Right lobe of liver (tissue), 6 donors: ENCODE measurements at regions of chr11 and their contacts with region 1.

Region 1: DNA sequence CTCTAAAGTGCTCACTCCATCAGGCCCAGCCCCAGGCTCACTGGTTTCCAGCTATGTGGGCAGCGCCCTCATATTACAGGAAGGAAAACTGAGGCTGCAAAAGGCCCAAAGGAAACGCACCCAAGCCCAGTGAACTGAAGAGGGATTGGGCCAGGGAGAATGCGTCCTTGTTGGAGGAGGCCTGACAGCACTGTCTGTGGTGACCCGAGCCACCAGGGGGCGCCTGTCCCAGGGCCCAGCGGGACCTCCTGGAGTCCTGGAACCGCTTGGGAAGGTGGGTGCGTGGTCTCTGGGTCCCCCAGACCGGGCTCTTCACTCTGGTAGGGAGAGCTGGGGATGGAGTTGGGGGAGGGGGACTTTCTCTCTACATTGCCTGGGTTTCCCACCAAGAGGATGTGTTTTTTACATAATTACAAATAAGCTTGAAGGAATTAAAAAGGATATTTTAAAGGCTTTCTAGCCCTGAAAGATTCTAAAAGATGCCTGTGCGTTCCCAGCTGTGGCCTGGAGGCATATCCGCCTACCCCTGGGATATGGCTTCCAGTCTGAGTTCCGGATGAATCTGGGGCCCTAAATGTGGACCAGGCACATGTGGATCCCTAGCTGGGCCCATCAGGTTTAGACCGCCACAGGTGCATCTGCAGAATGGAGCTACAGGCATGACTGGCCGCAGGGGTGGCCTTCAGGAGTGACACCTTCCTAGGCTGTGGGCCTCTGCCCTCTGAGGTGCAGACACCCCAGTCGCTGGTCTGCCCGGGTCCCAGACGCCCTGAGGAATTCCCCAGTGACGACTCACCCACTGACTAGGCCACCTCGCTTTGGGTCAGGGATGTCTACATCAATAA is 4.2 kb downstream of the SPI1 start:
- DNase-seq: peak; percentile 86 to 88 (median 86)
- ATAC-seq: peak; percentile 84 to 91 (median 86)
- H3K4me3 ChIP-seq: no peak overlapping the region
- H3K27ac ChIP-seq: no peak overlapping the region
- H3K4me1 ChIP-seq: peaks cover 0 to 2% (median 0%) of the 10 kb centered on the region in 4 donors
- H3K27me3 ChIP-seq: no peaks in the 10 kb centered on the region
- CTCF ChIP-seq: peak; percentile 87 to 97 (median 96)
- POLR2A ChIP-seq: no peak

Region 2: DNA sequence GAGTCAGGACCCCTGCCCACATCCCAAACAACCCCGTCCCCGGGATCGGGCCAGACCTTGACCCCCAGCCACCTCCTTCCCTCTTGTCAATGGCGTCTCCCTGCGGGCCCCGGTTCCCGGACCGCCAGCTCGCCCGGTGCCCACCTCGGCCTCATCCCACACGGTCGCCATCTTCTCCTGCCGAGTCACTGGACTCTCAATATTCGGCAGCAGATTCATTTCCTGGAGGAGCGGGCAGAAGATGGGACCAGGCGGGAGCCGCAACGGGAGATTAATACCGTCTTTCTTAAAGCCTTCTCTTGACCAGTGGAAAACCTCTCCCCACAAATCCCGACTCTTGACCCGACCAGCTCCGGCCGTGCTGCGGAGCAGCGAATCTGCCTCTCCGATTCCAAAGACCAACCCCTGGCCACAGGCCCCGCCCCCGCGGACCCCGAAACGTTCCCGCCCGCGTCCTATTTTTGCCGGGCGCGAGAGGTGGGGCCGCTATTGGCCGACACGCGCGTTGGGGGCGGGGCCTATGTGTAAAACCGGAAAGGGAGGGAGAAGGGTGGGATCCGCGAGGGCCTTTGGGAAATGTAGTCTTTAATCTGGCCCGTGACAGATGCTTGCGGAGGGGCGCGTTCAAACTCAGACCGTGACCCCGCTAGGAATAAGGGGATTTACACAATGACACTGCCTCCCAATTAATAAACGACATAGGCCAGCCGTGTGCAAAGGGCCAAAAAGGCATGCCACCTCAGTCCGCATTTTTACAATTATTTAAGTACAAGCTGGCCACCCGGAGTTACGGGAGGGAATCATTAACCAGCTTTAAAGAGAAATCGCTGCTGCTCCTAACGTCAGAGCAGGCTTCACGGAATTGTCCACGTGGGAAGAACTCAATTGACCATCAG is 52.2 kb after region 1 on chr11 and contains the start of gene PSMC3:
- intact Hi-C with region 1: loop called in 1 of 2 experiments (anchors 10 kb)
- DNase-seq: peak; percentile 98 to 99 (median 98)
- ATAC-seq: peak; percentile 92 to 96 (median 94)
- H3K4me3 ChIP-seq: peak within 1 kb of the TSS; percentile 77 to 99 (median 81)
- H3K27ac ChIP-seq: peak within 1 kb of the TSS; percentile 93 to 98 (median 95)
- H3K4me1 ChIP-seq: peaks cover 0 to 13% (median 3%) of the 10 kb centered on the region in 4 donors
- H3K27me3 ChIP-seq: no peaks in the 10 kb centered on the region
- CTCF ChIP-seq: no peak
- POLR2A ChIP-seq: peak; percentile 66
- total RNA-seq, gene PSMC3: 52.5 to 98.1 (median 63.3) TPM

Region 3: DNA sequence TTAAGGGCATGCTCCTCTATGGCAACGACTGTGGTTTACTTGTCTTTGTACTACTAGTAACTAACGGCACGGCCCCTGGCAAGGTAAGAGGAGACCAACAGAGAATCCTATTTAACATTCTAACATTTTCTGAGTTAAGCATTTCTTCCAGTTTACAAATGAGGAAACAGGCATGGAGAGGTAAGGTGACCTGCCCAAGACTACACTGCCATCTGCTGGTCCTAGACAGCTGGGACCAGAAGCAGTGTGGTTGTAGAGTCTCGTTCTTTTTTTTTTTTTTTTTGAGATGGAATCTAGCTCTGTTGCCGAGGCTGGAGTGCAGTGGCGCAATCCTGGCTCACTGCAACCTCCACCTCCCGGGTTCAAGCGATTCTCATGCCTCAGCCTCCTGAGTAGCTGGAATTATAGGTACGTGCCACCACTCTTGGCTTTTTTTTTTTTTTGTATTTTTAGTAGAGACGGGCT is 80.1 kb after region 1 on chr11:
- intact Hi-C with region 1: loop called in 1 of 2 experiments (anchors 5 kb)
- DNase-seq: peak; percentile 62 to 84 (median 80)
- ATAC-seq: peak; percentile 93 to 98 (median 96)
- H3K4me3 ChIP-seq: no peak overlapping the region
- H3K27ac ChIP-seq: no peak overlapping the region
- H3K4me1 ChIP-seq: peaks cover 0 to 9% (median 3%) of the 10 kb centered on the region in 4 donors
- H3K27me3 ChIP-seq: no peaks in the 10 kb centered on the region
- CTCF ChIP-seq: peak; percentile 80 to 86 (median 84)
- POLR2A ChIP-seq: no peak